ENCODE measurements at regions of chr1 and their contacts with region 1.

Region 1: GRCh38 chr1:21255278-21255942 is 34.9 kb downstream of the ECE1 start:
- DNase-seq: peak; percentile 67 to 82 (median 75)
- ATAC-seq: peak; percentile 92
- H3K4me3 ChIP-seq: no peak overlapping the region
- H3K4me3 Mint-ChIP-seq: no peak overlapping the region
- H3K27ac ChIP-seq: no peak overlapping the region
- H3K27ac Mint-ChIP-seq: peak overlapping the region in 6 of 9 donors; percentile 13 to 87 (median 71)
- H3K4me1 ChIP-seq: peaks cover 4 to 16% of the 10 kb centered on the region in 2 donors
- H3K4me1 Mint-ChIP-seq: peaks cover 15 to 35% (median 28%) of the 10 kb centered on the region in 7 donors
- H3K27me3 ChIP-seq: no peaks in the 10 kb centered on the region
- H3K27me3 Mint-ChIP-seq: no peaks in the 10 kb centered on the region

Region 2: DNA sequence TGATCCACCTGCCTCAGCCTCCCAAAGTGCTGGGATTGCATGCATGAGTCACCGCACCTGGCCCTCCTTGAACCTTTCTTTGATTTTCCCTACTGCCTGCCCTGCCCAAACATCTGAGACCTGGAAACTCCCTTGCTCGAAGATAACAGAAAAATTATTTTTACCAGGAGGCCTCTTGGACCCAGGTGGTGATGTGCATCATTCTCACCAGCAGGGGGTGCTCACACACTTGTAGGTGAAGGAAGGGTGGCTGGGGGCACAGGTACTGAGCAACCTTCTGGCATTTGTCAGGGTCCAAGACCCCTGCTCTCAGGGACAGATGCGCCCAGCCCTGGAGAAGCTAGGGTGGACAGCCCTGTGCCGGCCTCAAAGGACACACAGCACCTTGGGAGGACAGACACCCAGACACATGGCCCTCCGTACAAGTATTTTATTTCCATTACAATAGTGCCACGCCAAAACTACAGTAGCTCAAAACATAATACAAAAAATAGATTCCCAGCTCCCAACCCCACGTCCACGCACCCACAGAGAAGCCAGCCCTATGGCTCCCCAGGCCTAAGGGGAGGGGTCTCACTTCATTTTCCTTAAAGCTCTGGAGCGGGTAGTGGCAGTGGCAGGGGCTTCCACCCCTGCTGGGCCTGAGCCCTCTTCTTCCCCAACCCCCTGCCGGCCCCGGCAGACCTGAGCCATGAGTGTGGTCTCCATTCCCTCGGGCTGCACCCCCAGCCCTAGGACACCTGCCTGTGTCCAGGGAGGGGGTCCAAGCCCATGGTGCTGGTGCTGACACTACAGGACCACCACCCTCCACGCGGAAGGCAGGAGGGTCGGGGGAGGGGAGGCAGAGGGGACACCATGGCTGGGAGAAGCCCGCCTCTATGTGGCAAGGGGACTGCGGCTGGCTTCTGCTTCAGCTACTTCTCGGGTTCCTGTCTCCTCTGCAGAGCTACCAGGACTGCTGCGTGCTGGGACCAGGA is 38.3 kb before region 1 on chr1:
- CTCF ChIA-PET with region 1: interaction called, 4 read pairs
- POLR2A ChIA-PET with region 1: no interaction called
- intact Hi-C with region 1: loop called in 1 of 2 experiments (anchors 1 kb)
- DNase-seq: peak; percentile 37 to 66 (median 60)
- ATAC-seq: peak; percentile 82
- H3K4me3 ChIP-seq: no peak overlapping the region
- H3K4me3 Mint-ChIP-seq: no peak overlapping the region
- H3K27ac ChIP-seq: no peak overlapping the region
- H3K27ac Mint-ChIP-seq: peak overlapping the region in 8 of 9 donors; percentile 30 to 93 (median 70)
- H3K4me1 ChIP-seq: no peaks in the 10 kb centered on the region
- H3K4me1 Mint-ChIP-seq: peaks cover 0 to 8% (median 6%) of the 10 kb centered on the region in 7 donors
- H3K27me3 ChIP-seq: no peaks in the 10 kb centered on the region
- H3K27me3 Mint-ChIP-seq: no peaks in the 10 kb centered on the region

Region 3: GRCh38 chr1:21270086-21270689 is 14.8 kb after region 1 on chr1:
- CTCF ChIA-PET with region 1: interaction called, 52 read pairs
- POLR2A ChIA-PET with region 1: interaction called, 3 read pairs
- intact Hi-C with region 1: loop called (anchors 1 kb)
- DNase-seq: peak; percentile 67 to 87 (median 80)
- ATAC-seq: peak; percentile 95
- H3K4me3 ChIP-seq: no peak overlapping the region
- H3K4me3 Mint-ChIP-seq: peak overlapping the region in 2 of 10 donors; percentile 6 to 48
- H3K27ac ChIP-seq: no peak overlapping the region
- H3K27ac Mint-ChIP-seq: peak overlapping the region; percentile 8 to 80 (median 48)
- H3K4me1 ChIP-seq: peaks cover 0 to 18% of the 10 kb centered on the region in 2 donors
- H3K4me1 Mint-ChIP-seq: peaks cover 13 to 34% (median 18%) of the 10 kb centered on the region in 7 donors
- H3K27me3 ChIP-seq: no peaks in the 10 kb centered on the region
- H3K27me3 Mint-ChIP-seq: no peaks in the 10 kb centered on the region

Region 4: DNA sequence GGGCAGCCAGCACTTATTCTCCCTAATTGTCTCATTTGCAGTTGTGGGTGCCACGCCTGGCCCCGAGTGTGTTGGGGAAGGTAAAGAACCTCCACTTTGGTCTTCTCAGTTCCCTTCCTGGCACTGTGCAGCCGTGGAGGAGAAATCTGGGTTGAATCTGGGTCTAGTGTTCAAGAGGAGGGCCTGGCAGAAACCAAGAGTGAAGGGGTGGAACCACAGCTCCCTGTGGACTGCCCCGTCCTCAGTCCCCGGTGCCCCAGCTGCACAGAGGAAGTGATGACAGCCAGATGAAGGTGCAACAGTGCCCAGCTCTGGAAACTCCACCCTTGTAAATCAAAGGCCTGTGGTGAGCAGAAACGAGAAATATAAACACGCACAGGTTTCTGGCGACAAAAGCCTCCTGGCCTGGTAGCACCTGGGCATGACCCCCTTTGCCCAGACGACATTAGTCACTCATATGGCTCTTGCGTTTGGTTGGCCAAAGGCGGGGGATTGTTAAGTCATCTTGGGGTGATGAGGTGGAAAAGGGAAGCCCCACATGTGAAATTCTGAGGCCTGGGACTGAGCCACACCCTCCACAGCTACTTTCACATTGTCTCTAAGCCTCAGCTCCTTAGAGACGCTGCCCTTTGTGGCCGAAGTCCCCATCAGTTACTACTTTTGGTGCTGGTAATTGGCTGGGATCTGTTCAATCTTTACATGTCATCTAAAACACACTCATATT is 39.0 kb after region 1 on chr1:
- CTCF ChIA-PET with region 1: interaction called, 14 read pairs
- POLR2A ChIA-PET with region 1: interaction called, 6 read pairs
- intact Hi-C with region 1: loop called (anchors 1 to 5 kb)
- DNase-seq: peak; percentile 57 to 95 (median 91)
- ATAC-seq: peak; percentile 87
- H3K4me3 ChIP-seq: peak overlapping the region; percentile 69
- H3K4me3 Mint-ChIP-seq: peak overlapping the region; percentile 81 to 97 (median 93)
- H3K27ac ChIP-seq: peak overlapping the region; percentile 94
- H3K27ac Mint-ChIP-seq: peak overlapping the region; percentile 91 to 100 (median 98)
- H3K4me1 ChIP-seq: peaks cover 60 to 62% of the 10 kb centered on the region in 2 donors
- H3K4me1 Mint-ChIP-seq: peaks cover 50 to 91% (median 84%) of the 10 kb centered on the region in 7 donors
- H3K27me3 ChIP-seq: no peaks in the 10 kb centered on the region
- H3K27me3 Mint-ChIP-seq: no peaks in the 10 kb centered on the region

Region 5: GRCh38 chr1:21344750-21345443 is 89.5 kb after region 1 on chr1:
- CTCF ChIA-PET with region 1: interaction called, 3 read pairs
- POLR2A ChIA-PET with region 1: interaction called, 9 read pairs
- intact Hi-C with region 1: loop called (anchors 1 to 5 kb)
- DNase-seq: no peak
- ATAC-seq: peak; percentile 33
- H3K4me3 ChIP-seq: peak overlapping the region; percentile 59
- H3K4me3 Mint-ChIP-seq: peak overlapping the region in 8 of 10 donors; percentile 85 to 92 (median 90)
- H3K27ac ChIP-seq: peak overlapping the region; percentile 72
- H3K27ac Mint-ChIP-seq: peak overlapping the region; percentile 47 to 94 (median 88)
- H3K4me1 ChIP-seq: peaks cover 23 to 45% of the 10 kb centered on the region in 2 donors
- H3K4me1 Mint-ChIP-seq: peaks cover 30 to 44% (median 44%) of the 10 kb centered on the region in 7 donors
- H3K27me3 ChIP-seq: no peaks in the 10 kb centered on the region
- H3K27me3 Mint-ChIP-seq: no peaks in the 10 kb centered on the region

Region 6: DNA sequence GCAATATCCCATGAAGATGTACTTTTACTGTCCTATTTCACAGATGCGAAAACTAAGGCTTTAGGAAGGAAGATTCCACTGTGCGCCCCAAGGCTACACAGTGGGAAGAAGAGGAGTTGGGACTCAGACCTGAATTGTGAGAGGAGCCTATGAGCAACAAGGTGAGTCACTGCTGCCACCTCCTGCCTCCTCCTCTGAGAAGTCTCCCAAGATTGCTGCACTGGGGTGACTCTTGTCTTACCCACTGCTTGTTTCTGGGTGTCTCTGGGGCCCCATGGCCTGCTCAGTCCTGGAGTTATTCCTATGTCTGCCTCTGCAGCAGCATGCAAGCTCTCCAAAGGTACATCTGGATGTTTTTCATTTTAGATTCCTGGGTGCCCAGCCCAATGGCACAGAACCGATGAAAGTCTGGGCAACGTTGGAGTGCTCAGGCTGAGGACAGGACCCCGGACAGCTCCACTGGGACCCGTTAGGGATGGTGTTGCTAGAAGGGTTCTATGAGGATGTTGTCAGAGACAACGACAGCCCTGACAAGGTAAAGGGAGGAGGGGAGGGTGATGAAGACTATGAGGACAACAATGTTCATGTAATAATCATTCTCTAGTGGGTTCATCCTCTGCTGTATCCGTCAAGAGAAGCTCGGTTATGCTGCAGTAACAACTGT is 1370.0 kb after region 1 on chr1:
- CTCF ChIA-PET with region 1: no interaction called
- POLR2A ChIA-PET with region 1: no interaction called
- intact Hi-C with region 1: no loop called
- DNase-seq: no peak
- ATAC-seq: no peak
- H3K4me3 ChIP-seq: no peak overlapping the region
- H3K4me3 Mint-ChIP-seq: no peak overlapping the region
- H3K27ac ChIP-seq: no peak overlapping the region
- H3K27ac Mint-ChIP-seq: no peak overlapping the region
- H3K4me1 ChIP-seq: no peaks in the 10 kb centered on the region
- H3K4me1 Mint-ChIP-seq: no peaks in the 10 kb centered on the region
- H3K27me3 ChIP-seq: peaks cover 0 to 2% of the 10 kb centered on the region in 2 donors
- H3K27me3 Mint-ChIP-seq: peaks cover 23 to 67% (median 52%) of the 10 kb centered on the region in 5 donors

Measured in naive thymus-derived CD4-positive, alpha-beta T cell (primary cell).